Activated CD4-positive, alpha-beta memory T cell treated with anti-CD3 and anti-CD28 coated beads for 36 hours (primary cell): ENCODE measurements at regions of chr14 and their contacts with region 1.

Region 1: DNA sequence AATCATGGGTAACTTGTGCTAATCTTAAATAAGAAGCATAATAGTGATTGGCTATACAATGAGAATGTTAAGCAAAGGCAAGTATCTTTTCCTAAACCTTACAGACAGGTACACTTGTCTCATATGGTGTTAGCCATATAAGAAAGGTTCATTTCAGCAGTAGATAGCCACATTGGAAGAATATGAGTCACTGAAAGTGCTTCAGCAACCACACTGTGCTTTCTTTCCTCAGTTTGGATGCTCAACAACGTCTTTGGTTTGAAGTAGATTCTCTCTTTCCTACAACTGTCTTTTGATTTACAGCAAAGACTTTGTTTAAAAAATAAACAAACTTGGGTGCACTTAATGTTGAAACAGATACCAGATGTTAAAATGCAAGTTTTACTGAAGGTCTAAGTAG is 8.9 kb downstream of the DDHD1 start:
- DNase-seq: peak; percentile 26
- H3K4me3 Mint-ChIP-seq: no peak overlapping the region
- H3K27ac Mint-ChIP-seq: peak overlapping the region; percentile 54
- H3K4me1 Mint-ChIP-seq: peaks cover 70% of the 10 kb centered on the region
- H3K27me3 Mint-ChIP-seq: no peaks in the 10 kb centered on the region

Region 2: GRCh38 chr14:53126731-53127130 is 17.5 kb before region 1 on chr14:
- CTCF ChIA-PET with region 1: no interaction called
- POLR2A ChIA-PET with region 1: no interaction called
- intact Hi-C with region 1: loop called (anchors 2 kb)
- DNase-seq: no peak
- H3K4me3 Mint-ChIP-seq: no peak overlapping the region
- H3K27ac Mint-ChIP-seq: peak overlapping the region; percentile 46
- H3K4me1 Mint-ChIP-seq: peaks cover 10% of the 10 kb centered on the region
- H3K27me3 Mint-ChIP-seq: no peaks in the 10 kb centered on the region

Region 3: GRCh38 chr14:53231201-53231600 is 87.0 kb after region 1 on chr14:
- CTCF ChIA-PET with region 1: no interaction called
- POLR2A ChIA-PET with region 1: no interaction called
- intact Hi-C with region 1: no loop called
- DNase-seq: no peak
- H3K4me3 Mint-ChIP-seq: no peak overlapping the region
- H3K27ac Mint-ChIP-seq: no peak overlapping the region
- H3K4me1 Mint-ChIP-seq: no peaks in the 10 kb centered on the region
- H3K27me3 Mint-ChIP-seq: peaks cover 1% of the 10 kb centered on the region

Region 4: DNA sequence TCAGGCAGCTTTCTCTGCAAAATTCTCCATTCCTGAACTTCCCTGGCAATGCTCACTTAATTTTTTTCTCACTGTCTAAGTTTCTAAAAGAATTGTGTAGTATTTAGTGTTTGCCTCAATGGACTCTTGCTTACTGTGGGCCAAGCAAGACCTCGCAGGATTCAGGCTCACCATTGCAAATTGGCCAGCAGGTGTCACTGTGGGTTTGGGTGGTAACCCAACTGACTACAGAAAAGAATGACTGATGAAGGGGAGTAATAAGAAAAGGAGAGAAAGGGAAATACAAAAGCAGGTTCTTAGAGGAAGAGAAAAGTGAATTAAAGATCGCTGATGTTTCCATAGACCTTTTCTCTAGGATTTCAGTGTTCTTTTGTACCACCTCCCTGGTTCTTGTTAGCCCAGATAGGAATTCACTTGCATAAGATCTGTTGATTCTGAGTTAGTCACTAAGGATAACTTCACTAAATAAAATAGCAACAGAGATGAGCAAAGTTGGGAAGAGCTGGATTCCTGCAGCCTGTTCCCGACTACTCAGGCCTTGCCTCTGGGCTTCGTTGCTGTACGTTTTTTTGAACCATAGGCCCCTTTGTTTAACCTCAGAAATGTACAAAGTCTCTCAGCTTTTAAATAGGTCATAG is 395.4 kb after region 1 on chr14:
- CTCF ChIA-PET with region 1: no interaction called
- POLR2A ChIA-PET with region 1: no interaction called
- intact Hi-C with region 1: no loop called
- DNase-seq: peak; percentile 67
- H3K4me3 Mint-ChIP-seq: no peak overlapping the region
- H3K27ac Mint-ChIP-seq: no peak overlapping the region
- H3K4me1 Mint-ChIP-seq: no peaks in the 10 kb centered on the region
- H3K27me3 Mint-ChIP-seq: no peaks in the 10 kb centered on the region